ENCODE measurements at regions of chr7 and their contacts with region 1.

Region 1: DNA sequence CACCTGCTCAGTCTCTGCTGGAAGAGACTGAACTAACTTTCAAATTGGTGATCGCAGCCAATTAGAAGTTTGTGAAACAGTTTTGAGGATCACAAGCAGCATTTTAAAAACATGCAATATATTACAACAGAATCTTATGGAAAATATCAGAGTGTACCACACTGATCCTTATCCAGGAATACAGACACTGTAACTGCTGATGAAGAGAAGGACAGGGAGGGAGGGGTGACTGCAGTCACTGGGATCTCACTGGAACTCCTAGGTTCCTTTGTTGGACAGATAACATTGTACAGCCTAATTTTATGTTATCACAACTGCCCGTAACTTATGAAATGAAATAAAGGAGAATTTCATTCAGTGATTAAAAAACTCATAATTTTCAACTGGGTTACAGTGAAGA is 6.8 kb upstream of the UBN2 start:
- DNase-seq: no peak
- ATAC-seq: no peak
- H3K4me3 ChIP-seq: no peak overlapping the region
- H3K27ac ChIP-seq: no peak overlapping the region
- H3K4me1 ChIP-seq: no peaks in the 10 kb centered on the region
- H3K27me3 ChIP-seq: no peaks in the 10 kb centered on the region
- CTCF ChIP-seq: no peak

Region 2: DNA sequence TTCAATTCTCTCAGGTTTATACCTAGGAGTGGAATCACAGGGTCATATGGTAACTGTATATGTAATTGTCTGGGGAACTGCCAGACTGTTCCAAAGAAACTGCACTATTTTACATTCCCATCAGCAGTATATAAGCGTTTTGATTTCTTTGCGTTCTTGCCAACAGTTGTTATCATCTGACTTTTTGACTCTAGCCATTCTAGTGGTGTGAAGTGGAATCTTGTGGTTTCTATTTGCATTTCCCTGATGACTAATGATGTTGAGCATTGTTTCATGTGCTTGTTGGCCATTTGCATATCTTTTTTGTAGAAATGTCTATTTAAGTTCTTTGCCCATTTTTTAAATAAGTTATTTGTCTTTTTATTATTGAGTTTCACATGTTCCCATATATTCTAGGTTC is 70.4 kb before region 1 on chr7:
- intact Hi-C with region 1: loop called in 1 of 2 experiments (anchors 10 kb)
- DNase-seq: no peak
- ATAC-seq: no peak
- H3K4me3 ChIP-seq: no peak overlapping the region
- H3K27ac ChIP-seq: no peak overlapping the region
- H3K4me1 ChIP-seq: no peaks in the 10 kb centered on the region
- H3K27me3 ChIP-seq: no peaks in the 10 kb centered on the region
- CTCF ChIP-seq: no peak

Measured in psoas muscle (tissue), 8 donors.